HEK293 (cell line): ENCODE measurements at regions of chr20 and their contacts with region 1.

Region 1: GRCh38 chr20:44217342-44218092 is 6.9 kb upstream of the OSER1 start:
- H3K4me3 ChIP-seq: no peak overlapping the region
- H3K27ac ChIP-seq: no peak overlapping the region
- H3K4me1 ChIP-seq: no peaks in the 10 kb centered on the region
- CTCF ChIP-seq: peak; percentile 85

Region 2: GRCh38 chr20:44137210-44137801 is 80.2 kb before region 1 on chr20:
- CTCF ChIA-PET with region 1: no interaction called
- POLR2A ChIA-PET with region 1: no interaction called
- H3K4me3 ChIP-seq: no peak overlapping the region
- H3K27ac ChIP-seq: no peak overlapping the region
- H3K4me1 ChIP-seq: no peaks in the 10 kb centered on the region
- CTCF ChIP-seq: no peak

Region 3: GRCh38 chr20:44153636-44154043 is 63.9 kb before region 1 on chr20:
- CTCF ChIA-PET with region 1: no interaction called
- POLR2A ChIA-PET with region 1: no interaction called
- H3K4me3 ChIP-seq: no peak overlapping the region
- H3K27ac ChIP-seq: no peak overlapping the region
- H3K4me1 ChIP-seq: no peaks in the 10 kb centered on the region
- CTCF ChIP-seq: no peak

Region 4: DNA sequence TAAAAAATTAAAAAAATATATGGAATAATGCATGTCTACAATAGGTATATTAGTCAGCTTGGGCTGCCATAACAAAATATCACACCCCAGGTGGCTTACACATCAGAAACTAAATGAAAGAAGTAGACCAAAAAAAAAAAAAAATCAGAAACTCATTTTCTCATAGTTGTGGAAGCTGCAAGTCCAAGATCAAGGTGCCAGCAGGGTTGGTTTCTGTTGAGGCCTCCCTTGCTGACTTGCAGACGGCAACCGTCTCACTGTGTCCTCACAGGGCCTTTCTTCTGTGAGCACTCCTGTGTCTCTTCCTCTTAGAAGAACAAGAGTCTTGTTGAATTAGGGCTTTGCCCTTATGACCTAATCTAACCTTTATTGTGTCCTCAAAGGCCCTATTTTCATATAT is 18.2 kb after region 1 on chr20:
- CTCF ChIA-PET with region 1: interaction called, 13 read pairs
- POLR2A ChIA-PET with region 1: no interaction called
- H3K4me3 ChIP-seq: no peak overlapping the region
- H3K27ac ChIP-seq: no peak overlapping the region
- H3K4me1 ChIP-seq: no peaks in the 10 kb centered on the region
- CTCF ChIP-seq: no peak

Region 5: GRCh38 chr20:44388466-44389023 is 171.0 kb after region 1 on chr20:
- CTCF ChIA-PET with region 1: interaction called, 168 read pairs
- POLR2A ChIA-PET with region 1: interaction called, 8 read pairs
- H3K4me3 ChIP-seq: no peak overlapping the region
- H3K27ac ChIP-seq: no peak overlapping the region
- H3K4me1 ChIP-seq: no peaks in the 10 kb centered on the region
- CTCF ChIP-seq: peak; percentile 69; the same call in 1 of the 2 replicates

Region 6: GRCh38 chr20:44471481-44471882 is 254.0 kb after region 1 on chr20:
- CTCF ChIA-PET with region 1: interaction called, 14 read pairs
- POLR2A ChIA-PET with region 1: no interaction called
- H3K4me3 ChIP-seq: no peak overlapping the region
- H3K27ac ChIP-seq: no peak overlapping the region
- H3K4me1 ChIP-seq: no peaks in the 10 kb centered on the region
- CTCF ChIP-seq: peak; percentile 88

Region 7: DNA sequence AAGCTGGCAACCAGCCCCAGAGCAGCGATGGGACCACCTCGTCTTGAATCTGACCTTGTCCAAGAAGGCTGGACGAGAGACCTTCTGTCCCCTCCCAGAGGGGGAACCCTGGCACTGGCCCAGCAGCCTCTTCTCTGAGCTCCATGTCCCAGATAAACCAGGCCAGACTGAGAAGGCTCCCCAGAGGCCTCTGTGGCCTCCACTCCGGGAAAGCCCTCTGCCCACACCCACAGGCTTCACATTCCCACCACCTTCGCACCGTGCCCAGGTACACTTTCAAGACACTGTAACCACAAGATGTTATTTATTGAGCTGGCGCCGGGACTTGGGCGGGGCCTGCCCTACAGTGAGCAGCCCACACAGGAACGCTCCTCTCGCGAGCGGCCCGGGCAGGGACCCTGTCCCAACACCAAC is 400.8 kb after region 1 on chr20:
- CTCF ChIA-PET with region 1: interaction called, 10 read pairs
- POLR2A ChIA-PET with region 1: no interaction called
- H3K4me3 ChIP-seq: no peak overlapping the region
- H3K27ac ChIP-seq: no peak overlapping the region
- H3K4me1 ChIP-seq: no peaks in the 10 kb centered on the region
- CTCF ChIP-seq: no peak